HCT116 (cell line): ENCODE measurements at regions of chr10 and their contacts with region 1.

Region 1: DNA sequence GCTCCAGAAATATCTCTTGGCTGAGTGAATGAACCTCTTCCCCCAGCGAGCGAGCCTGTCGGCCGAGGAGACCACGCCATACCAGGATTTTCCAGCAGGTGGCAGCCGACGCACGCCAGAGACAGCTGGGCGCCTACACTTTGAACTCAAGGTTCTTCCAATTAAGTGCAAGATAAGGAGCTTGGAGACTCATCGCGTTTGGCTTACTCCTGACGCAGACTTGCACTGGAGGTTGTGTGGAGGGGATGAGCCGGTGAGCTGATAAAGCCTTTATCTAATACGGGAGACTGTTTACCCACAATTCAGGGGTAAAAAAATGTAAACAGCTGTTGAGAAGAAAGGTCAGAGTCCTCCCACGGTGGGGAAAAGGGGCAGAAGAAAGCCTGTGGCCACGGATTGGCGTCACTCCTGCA is 45.9 kb upstream of the EMX2 start:
- DNase-seq: peak; percentile 84
- ATAC-seq: peak; percentile 97
- H3K4me3 ChIP-seq: no peak overlapping the region; a peak in 1 of 4 replicates
- H3K27ac ChIP-seq: no peak overlapping the region
- H3K4me1 ChIP-seq: peaks cover 0 to 7% of the 10 kb centered on the region in 2 experiments; a peak in 1 of 4 replicates
- H3K27me3 ChIP-seq: peaks cover 31% of the 10 kb centered on the region
- CTCF ChIP-seq: peak; percentile 96 to 100 (median 97)
- POLR2A ChIP-seq: no peak
- RAD21 ChIP-seq: peak; percentile 99

Region 2: GRCh38 chr10:117419921-117420320 is 76.7 kb before region 1 on chr10:
- CTCF ChIA-PET with region 1: no interaction called
- POLR2A ChIA-PET with region 1: no interaction called
- RAD21 ChIA-PET with region 1: no interaction called
- intact Hi-C with region 1: no loop called
- DNase-seq: no peak
- ATAC-seq: no peak
- H3K4me3 ChIP-seq: no peak overlapping the region
- H3K27ac ChIP-seq: no peak overlapping the region
- H3K4me1 ChIP-seq: no peaks in the 10 kb centered on the region
- H3K27me3 ChIP-seq: no peaks in the 10 kb centered on the region
- CTCF ChIP-seq: no peak
- POLR2A ChIP-seq: no peak
- RAD21 ChIP-seq: no peak

Region 3: GRCh38 chr10:117483056-117483604 is 13.5 kb before region 1 on chr10:
- CTCF ChIA-PET with region 1: interaction called, 10 read pairs
- POLR2A ChIA-PET with region 1: no interaction called
- RAD21 ChIA-PET with region 1: no interaction called
- intact Hi-C with region 1: no loop called
- DNase-seq: no peak
- ATAC-seq: no peak
- H3K4me3 ChIP-seq: no peak overlapping the region
- H3K27ac ChIP-seq: no peak overlapping the region
- H3K4me1 ChIP-seq: peaks cover 0 to 6% of the 10 kb centered on the region in 2 experiments; a peak in 2 of 4 replicates
- H3K27me3 ChIP-seq: no peaks in the 10 kb centered on the region
- CTCF ChIP-seq: no peak
- POLR2A ChIP-seq: no peak
- RAD21 ChIP-seq: no peak

Region 4: DNA sequence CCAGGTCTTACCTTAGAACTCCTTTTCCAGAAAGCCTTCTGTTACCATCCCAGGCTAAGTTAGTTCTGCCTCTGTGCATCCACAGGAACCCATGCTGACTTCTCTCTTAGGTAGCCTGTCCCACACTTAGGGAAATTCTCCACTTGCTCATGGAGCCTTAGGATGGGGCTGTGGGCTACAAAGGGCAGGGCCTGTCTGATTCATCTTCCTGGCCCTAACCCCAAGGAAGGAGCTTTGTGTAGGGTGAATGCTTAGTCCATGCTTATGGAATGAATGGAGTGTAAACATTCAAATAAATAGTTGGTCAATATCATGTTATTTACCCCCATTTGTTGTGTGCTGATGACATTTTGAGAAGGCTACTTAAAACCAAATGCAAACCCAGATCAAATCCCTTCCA is 100.6 kb after region 1 on chr10:
- CTCF ChIA-PET with region 1: no interaction called
- POLR2A ChIA-PET with region 1: no interaction called
- RAD21 ChIA-PET with region 1: no interaction called
- intact Hi-C with region 1: no loop called
- DNase-seq: no peak
- ATAC-seq: no peak
- H3K4me3 ChIP-seq: no peak overlapping the region
- H3K27ac ChIP-seq: no peak overlapping the region
- H3K4me1 ChIP-seq: no peaks in the 10 kb centered on the region
- H3K27me3 ChIP-seq: peaks cover 48% of the 10 kb centered on the region
- CTCF ChIP-seq: no peak
- POLR2A ChIP-seq: no peak
- RAD21 ChIP-seq: no peak

Region 5: DNA sequence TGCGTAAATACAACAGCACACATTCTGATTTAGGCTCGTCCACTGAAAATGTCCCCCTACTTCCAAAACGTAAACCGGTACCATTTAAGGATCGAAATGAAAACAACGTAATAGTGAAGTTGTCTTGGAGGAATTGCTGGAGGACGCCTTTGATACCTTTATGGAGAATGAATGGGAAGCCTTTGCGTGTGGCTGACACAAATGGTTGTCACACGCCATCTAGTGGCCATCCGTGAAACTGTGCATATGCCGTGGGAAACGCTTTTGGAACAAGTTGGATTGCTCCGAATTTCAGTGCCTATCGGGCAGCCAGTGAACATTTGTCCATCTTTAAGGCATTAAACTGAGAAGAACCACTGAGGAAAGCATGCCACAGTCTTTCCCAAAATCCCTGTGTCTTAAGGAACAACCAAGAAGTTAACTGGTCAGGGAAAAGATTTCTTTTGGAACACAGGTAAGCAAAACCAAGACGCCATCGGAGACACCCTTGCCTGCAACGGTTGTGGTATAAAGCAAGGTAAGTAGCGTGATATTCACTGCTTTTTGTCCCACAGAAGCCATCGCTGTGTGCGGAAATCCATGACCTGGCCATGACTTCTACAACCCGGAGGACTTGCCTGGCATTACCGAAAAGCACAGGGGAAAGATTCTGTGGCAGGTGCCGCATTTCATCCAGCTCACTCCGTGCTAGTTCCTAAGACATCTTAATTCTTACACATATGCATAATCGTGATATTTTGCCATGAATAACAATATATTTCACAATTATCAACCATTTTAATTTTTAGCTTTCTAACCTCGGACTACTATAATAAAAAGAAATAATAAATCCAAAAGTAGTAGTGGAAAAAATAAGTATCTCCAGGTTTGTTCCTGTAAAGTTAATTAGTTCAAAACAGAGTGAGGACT is 744.9 kb after region 1 on chr10:
- CTCF ChIA-PET with region 1: interaction called, 34 read pairs
- POLR2A ChIA-PET with region 1: no interaction called
- RAD21 ChIA-PET with region 1: interaction called, 5 to 6 read pairs
- intact Hi-C with region 1: loop called (anchors 1 kb)
- DNase-seq: peak; percentile 81
- ATAC-seq: peak; percentile 88
- H3K4me3 ChIP-seq: no peak overlapping the region
- H3K27ac ChIP-seq: no peak overlapping the region
- H3K4me1 ChIP-seq: no peaks in the 10 kb centered on the region
- H3K27me3 ChIP-seq: peaks cover 81% of the 10 kb centered on the region
- CTCF ChIP-seq: peak; percentile 92 to 99 (median 98)
- POLR2A ChIP-seq: no peak
- RAD21 ChIP-seq: peak; percentile 98

Region 6: GRCh38 chr10:118423800-118424479 is 927.3 kb after region 1 on chr10:
- CTCF ChIA-PET with region 1: interaction called, 9 read pairs
- POLR2A ChIA-PET with region 1: no interaction called
- RAD21 ChIA-PET with region 1: no interaction called
- intact Hi-C with region 1: loop called (anchors 1 kb)
- DNase-seq: peak; percentile 98
- ATAC-seq: peak; percentile 97
- H3K4me3 ChIP-seq: no peak overlapping the region; a peak in 1 of 4 replicates
- H3K27ac ChIP-seq: no peak overlapping the region
- H3K4me1 ChIP-seq: peaks cover 2 to 5% of the 10 kb centered on the region in 2 experiments; a peak in 3 of 4 replicates
- H3K27me3 ChIP-seq: 0 out of 2 replicates have a peak, but pooled peaks cover 7% of the 10 kb centered on the region
- CTCF ChIP-seq: peak; percentile 89 to 98 (median 89)
- POLR2A ChIP-seq: no peak
- RAD21 ChIP-seq: peak; percentile 88

Region 7: DNA sequence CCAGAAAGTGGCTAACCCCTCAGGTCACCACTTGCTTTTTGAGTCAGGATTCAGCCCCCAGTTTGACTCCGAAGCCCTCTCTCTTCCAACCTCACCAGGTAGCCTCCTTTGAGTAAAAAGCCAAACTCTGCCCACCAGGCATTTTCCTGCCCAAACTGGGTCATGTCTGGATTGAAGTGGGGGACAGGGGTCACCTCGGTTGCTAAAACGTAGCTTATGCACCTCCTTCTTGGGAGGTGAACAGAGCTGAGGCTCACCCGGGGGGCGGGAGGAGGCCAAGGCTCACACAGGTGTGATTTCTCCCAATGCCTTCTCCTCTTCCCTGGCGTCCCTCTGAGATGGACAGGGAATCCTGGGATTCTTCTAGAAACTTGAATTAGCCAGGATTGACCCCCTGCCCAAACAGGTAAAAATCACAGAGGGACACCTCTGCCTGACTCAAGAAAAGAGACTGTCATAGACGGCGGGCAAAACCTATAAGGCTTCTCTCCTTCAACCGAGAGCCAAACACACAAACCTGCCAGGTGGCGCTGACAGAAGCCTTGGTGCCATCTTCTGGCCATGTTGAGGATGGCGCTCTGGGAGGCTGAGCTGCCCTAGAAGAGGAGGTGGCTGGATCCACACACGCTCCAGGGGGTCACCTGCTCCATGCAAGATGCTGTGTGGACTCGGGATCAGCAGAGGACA is 1047.2 kb after region 1 on chr10:
- CTCF ChIA-PET with region 1: interaction called, 14 read pairs
- POLR2A ChIA-PET with region 1: no interaction called
- RAD21 ChIA-PET with region 1: no interaction called
- intact Hi-C with region 1: loop called (anchors 1 kb)
- DNase-seq: peak; percentile 63
- ATAC-seq: peak; percentile 99
- H3K4me3 ChIP-seq: no peak overlapping the region
- H3K27ac ChIP-seq: no peak overlapping the region
- H3K4me1 ChIP-seq: peaks cover 0 to 3% of the 10 kb centered on the region in 2 experiments; a peak in 1 of 4 replicates
- H3K27me3 ChIP-seq: peaks cover 30% of the 10 kb centered on the region; the same call in 1 of the 2 replicates
- CTCF ChIP-seq: peak; percentile 88 to 94 (median 92)
- POLR2A ChIP-seq: no peak
- RAD21 ChIP-seq: peak; percentile 92